SK-N-SH (cell line): ENCODE measurements at regions of chr1 and their contacts with region 1.

Region 1: DNA sequence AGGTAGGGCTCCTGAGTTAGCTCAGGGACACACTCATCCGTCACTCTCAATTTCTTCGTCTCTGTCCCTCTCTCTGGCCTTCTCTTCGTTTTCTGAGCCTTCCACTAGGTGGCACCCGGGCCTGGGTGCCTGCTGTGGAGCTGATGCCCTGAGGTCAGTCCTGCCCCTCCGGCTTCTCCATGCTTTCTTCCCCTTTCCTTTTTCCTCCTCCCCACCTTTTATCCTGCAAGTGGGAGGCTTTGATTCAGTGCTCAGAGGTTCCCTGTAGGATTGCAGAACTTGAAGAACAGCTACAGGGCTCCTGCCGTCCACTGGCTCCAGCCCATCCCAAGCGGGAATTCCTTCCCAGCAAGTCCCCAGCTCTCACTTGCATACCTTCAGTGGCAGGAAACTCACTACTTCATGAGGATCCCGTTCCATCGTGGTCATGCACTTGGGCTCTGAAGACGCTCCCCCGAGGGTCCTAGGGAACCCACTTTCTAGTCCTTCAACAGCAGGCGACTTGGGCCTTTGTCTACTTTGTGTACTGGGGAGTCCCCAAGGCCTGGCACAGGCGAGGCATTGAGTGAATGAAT is 45.6 kb downstream of the SRRM1 start:
- DNase-seq: peak; percentile 77
- H3K4me3 ChIP-seq: no peak overlapping the region; a peak in 1 of 4 replicates
- H3K27ac ChIP-seq: no peak overlapping the region
- H3K4me1 ChIP-seq: peaks cover 0 to 6% of the 10 kb centered on the region in 2 experiments; a peak in 1 of 4 replicates
- H3K27me3 ChIP-seq: no peaks in the 10 kb centered on the region
- CTCF ChIP-seq: peak; percentile 88
- EP300 ChIP-seq: no peak
- RAD21 ChIP-seq: peak; percentile 94

Region 2: DNA sequence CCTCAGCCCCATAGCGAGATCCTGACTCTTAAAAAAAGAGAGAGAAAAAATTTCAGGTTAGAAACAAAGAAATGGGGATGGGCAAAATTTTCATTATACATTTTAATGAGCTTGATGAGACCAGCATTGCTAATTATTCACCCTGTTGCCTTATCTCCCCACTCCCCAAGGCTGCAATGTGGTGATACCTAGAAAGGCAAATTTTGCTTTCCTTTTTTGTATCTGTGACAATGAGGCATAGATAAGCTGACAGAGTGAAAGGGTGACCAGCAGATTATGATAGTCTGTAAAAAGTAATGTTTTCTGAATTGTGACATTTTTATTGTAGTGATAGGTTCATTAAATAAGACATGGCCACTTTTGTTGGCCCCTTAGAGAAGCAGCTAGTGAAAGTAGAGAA is 32.7 kb before region 1 on chr1:
- CTCF ChIA-PET with region 1: interaction called, 18 read pairs
- POLR2A ChIA-PET with region 1: no interaction called
- DNase-seq: no peak
- H3K4me3 ChIP-seq: no peak overlapping the region
- H3K27ac ChIP-seq: no peak overlapping the region
- H3K4me1 ChIP-seq: no peaks in the 10 kb centered on the region
- H3K27me3 ChIP-seq: no peaks in the 10 kb centered on the region
- CTCF ChIP-seq: no peak
- EP300 ChIP-seq: no peak
- RAD21 ChIP-seq: no peak

Region 3: DNA sequence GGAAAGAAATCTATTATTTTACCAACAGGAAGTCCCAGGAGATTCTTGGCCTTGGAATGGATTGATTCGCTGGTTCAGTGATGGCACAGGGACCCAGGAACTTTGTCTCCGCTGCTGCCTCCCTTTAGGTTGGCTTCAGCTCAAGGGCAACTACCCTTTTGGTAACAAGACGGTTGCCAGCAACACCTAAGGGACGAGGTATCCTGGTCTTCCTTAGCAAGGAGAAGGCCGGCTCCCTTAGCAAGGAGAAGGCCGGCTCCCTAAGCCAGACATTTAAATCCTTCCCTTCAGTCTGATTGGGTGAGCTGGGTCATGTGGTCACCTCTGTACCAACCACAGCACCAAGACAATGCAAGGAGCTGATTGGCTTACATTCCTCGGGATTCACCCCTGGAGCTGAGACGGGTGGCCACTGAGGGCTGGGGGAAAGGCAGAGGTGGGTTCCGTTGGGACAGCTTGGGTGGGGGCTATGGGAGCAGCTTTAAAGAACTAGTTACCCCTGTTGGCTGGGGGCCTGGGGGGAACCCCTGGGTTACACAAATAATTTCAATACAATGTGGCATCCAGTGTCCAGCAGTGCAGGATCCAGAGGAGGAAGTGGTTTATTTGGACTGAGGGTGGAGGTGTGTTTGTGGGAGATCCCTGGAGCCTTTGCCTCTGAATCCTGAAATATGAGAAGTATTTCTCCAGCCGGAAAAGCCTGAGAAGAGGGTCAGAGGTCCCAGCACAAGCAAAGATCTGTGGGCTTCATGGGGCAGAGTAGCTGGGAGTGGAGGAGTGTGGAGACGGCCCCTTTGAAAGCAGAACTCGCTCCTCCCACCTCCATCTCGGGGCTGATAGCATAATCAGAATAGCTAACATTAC is 35.9 kb after region 1 on chr1:
- CTCF ChIA-PET with region 1: interaction called, 12 read pairs
- POLR2A ChIA-PET with region 1: no interaction called
- DNase-seq: no peak
- H3K4me3 ChIP-seq: no peak overlapping the region
- H3K27ac ChIP-seq: peak overlapping the region in 1 of 2 experiments; percentile 38; a peak in 2 of 4 replicates
- H3K4me1 ChIP-seq: peaks cover 6 to 22% of the 10 kb centered on the region in 2 experiments; a peak in 3 of 4 replicates
- H3K27me3 ChIP-seq: no peaks in the 10 kb centered on the region
- CTCF ChIP-seq: no peak
- EP300 ChIP-seq: no peak
- RAD21 ChIP-seq: no peak

Region 4: GRCh38 chr1:24805534-24806301 is 117.0 kb after region 1 on chr1:
- CTCF ChIA-PET with region 1: interaction called, 11 read pairs
- POLR2A ChIA-PET with region 1: no interaction called
- DNase-seq: no peak
- H3K4me3 ChIP-seq: no peak overlapping the region
- H3K27ac ChIP-seq: peak overlapping the region; percentile 34 to 40; a peak in 2 of 4 replicates
- H3K4me1 ChIP-seq: peaks cover 16 to 45% of the 10 kb centered on the region in 2 experiments; a peak in 3 of 4 replicates
- H3K27me3 ChIP-seq: no peaks in the 10 kb centered on the region
- CTCF ChIP-seq: no peak
- EP300 ChIP-seq: no peak
- RAD21 ChIP-seq: no peak

Region 5: DNA sequence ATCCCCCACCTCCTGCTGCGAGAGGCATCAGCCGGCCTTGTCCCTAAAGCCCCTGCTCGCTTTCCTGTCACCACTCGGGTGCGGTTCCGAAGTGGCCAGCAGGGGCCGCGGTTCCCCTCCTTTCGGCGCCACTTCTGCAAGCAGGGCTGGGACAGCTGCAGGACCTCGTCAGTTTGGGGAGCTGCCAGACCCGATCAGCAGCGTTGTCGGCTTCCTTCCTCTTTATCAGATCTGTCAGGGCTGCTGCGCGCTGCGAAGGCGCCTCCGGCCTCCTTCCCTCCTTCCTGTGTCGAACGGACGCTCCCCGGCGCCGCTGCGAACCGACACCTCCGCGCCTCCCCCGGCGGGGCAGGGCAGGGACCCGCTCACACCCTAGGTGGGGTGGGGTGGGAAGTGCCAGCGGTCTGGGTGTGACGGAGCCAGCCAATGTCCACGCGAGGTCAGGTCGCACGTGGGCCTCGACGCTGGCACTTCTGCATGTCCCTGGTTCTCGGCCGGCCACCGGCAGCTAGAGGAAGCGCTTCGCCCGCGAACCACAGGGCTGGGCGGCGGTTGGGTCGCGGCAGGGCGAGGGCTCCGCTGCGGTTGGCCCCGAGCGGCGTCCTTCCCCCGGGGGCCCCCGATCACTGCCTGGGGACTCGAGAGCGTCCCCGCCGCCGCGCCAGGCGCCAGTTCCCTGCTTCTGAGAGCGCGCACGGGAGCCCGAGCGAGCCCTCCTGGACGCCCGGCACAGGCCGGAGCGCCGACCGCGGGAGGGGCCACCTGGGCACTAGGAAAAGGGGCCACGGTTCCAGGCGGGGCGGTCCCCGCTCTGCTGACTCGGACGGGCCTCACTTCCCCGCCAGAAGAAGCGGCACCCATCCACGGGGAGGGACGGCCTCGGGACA is 159.5 kb after region 1 on chr1:
- CTCF ChIA-PET with region 1: interaction called, 14 read pairs
- POLR2A ChIA-PET with region 1: no interaction called
- DNase-seq: peak; percentile 91
- H3K4me3 ChIP-seq: peak overlapping the region; percentile 37 to 55; a peak in 3 of 4 replicates
- H3K27ac ChIP-seq: no peak overlapping the region
- H3K4me1 ChIP-seq: peaks cover 0 to 10% of the 10 kb centered on the region in 2 experiments; a peak in 1 of 4 replicates
- H3K27me3 ChIP-seq: no peaks in the 10 kb centered on the region
- CTCF ChIP-seq: peak; percentile 86
- EP300 ChIP-seq: no peak
- RAD21 ChIP-seq: peak; percentile 88